Activated CD4-positive, alpha-beta memory T cell treated with anti-CD3 and anti-CD28 coated beads for 36 hours (primary cell): ENCODE measurements at regions of chr4 and their contacts with region 1.

Region 1: DNA sequence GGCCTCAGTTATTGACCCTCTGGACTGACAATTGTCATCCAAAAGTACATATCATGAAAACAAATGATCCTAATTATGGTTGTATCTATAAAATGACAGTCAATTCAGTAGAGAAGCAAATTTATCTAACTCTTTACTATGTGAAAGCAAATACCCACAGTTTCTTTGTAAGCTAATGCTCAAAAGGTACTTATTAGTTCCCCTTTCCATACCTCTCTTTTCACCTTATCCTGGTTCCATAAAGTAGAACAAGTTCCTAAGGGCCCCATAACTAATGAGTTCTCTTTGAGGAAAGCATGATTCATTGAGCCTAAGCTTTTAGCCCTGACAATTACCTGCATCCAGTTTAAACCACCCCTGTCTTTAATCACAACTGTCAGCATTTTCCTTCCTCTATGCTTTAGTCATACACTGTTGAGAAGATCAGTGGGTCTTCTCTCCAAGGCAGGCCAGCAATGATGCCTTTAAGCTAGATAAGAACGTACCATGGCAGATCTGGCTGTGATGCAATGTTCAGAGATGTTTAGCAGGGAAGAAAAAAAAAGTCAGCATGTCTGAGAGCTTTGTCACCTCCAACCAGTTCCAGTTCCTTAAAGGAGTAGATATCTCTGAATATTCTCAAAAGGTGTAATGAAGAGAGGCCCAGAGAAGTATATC is 179.7 kb upstream of the RASGEF1B start:
- DNase-seq: no peak
- H3K4me3 Mint-ChIP-seq: no peak overlapping the region
- H3K27ac Mint-ChIP-seq: peak overlapping the region; percentile 84
- H3K4me1 Mint-ChIP-seq: peaks cover 57% of the 10 kb centered on the region
- H3K27me3 Mint-ChIP-seq: no peaks in the 10 kb centered on the region

Region 2: DNA sequence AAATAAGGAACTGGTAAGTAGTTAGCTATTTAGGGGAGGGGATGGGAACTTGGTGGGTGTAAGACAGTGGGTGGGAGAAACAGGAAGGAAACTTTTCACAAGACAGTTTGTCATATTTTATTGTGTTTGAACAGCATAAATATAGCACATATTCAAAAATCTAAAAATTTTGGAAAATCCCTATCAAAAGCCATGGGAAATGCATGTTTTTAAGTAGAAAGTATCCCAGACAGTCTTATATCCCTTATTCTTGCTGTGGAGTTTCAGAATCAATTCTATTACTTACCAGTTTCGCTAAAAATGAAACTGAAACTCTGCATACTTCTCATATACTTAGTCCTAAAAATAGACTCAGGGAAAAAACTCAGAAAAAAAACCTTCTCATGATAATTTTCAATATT is 157.3 kb before region 1 on chr4:
- CTCF ChIA-PET with region 1: no interaction called
- POLR2A ChIA-PET with region 1: no interaction called
- intact Hi-C with region 1: loop called (anchors 2 kb)
- DNase-seq: no peak
- H3K4me3 Mint-ChIP-seq: no peak overlapping the region
- H3K27ac Mint-ChIP-seq: peak overlapping the region; percentile 64
- H3K4me1 Mint-ChIP-seq: peaks cover 47% of the 10 kb centered on the region
- H3K27me3 Mint-ChIP-seq: no peaks in the 10 kb centered on the region

Region 3: DNA sequence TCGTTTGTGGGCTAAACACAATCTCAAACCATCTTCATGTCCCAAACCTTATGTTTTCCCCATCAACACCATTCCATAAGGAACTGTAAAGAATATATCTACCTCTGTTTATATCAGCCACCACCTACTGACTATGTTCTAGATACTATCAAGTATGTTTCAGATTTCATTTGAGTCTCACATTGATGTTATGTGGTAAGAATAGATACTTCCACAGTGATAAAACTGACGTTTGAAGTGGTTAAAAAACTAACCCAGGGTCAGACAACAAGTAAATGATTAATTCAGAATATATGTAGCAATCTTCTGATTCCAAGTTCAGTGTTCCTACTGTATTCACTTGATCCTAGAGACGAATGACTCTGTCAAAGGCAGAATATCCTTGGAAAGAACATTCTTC is 22.9 kb before region 1 on chr4:
- CTCF ChIA-PET with region 1: no interaction called
- POLR2A ChIA-PET with region 1: no interaction called
- intact Hi-C with region 1: loop called (anchors 2 kb)
- DNase-seq: no peak
- H3K4me3 Mint-ChIP-seq: no peak overlapping the region
- H3K27ac Mint-ChIP-seq: no peak overlapping the region
- H3K4me1 Mint-ChIP-seq: peaks cover 10% of the 10 kb centered on the region
- H3K27me3 Mint-ChIP-seq: no peaks in the 10 kb centered on the region

Region 4: GRCh38 chr4:81666491-81666890 is 15.1 kb after region 1 on chr4:
- CTCF ChIA-PET with region 1: interaction called, 3 read pairs
- POLR2A ChIA-PET with region 1: no interaction called
- intact Hi-C with region 1: loop called (anchors 1 kb)
- DNase-seq: peak; percentile 10
- H3K4me3 Mint-ChIP-seq: no peak overlapping the region
- H3K27ac Mint-ChIP-seq: peak overlapping the region; percentile 20
- H3K4me1 Mint-ChIP-seq: peaks cover 15% of the 10 kb centered on the region
- H3K27me3 Mint-ChIP-seq: peaks cover 2% of the 10 kb centered on the region

Region 5: DNA sequence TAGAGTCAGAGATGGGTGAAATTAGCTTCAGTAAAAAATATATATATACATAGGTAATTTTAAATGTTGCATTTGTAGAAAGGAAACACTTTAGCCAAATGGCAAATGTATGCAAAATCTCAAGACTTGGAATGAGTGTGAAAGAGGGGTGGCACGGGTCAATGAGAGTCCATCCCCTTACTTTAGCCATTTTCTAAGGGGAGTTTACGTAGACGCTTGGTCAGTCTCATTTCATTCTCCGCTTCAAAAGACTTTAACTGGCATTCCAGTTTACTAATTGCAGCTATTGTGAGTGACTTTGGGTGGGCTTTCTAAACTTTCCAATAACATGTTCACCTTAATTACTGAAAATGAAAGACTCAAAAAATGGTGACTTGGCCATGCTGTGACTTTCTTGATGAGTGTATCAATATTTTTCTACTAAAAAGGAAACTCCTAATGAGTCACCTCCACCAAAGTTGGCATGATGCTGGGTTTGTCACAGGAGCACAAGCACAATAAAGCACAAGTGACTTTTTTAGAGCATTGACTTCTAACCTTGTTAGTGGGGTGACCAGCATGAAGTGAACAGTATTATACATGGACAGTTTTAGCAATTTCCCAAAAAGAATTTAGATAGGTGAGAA is 176.3 kb after region 1 on chr4:
- CTCF ChIA-PET with region 1: no interaction called
- POLR2A ChIA-PET with region 1: no interaction called
- intact Hi-C with region 1: loop called (anchors 1 kb)
- DNase-seq: peak; percentile 49
- H3K4me3 Mint-ChIP-seq: no peak overlapping the region
- H3K27ac Mint-ChIP-seq: peak overlapping the region; percentile 16
- H3K4me1 Mint-ChIP-seq: peaks cover 15% of the 10 kb centered on the region
- H3K27me3 Mint-ChIP-seq: peaks cover 7% of the 10 kb centered on the region